HepG2 (cell line): ENCODE measurements at regions of chr16 and their contacts with region 1.

Region 1: DNA sequence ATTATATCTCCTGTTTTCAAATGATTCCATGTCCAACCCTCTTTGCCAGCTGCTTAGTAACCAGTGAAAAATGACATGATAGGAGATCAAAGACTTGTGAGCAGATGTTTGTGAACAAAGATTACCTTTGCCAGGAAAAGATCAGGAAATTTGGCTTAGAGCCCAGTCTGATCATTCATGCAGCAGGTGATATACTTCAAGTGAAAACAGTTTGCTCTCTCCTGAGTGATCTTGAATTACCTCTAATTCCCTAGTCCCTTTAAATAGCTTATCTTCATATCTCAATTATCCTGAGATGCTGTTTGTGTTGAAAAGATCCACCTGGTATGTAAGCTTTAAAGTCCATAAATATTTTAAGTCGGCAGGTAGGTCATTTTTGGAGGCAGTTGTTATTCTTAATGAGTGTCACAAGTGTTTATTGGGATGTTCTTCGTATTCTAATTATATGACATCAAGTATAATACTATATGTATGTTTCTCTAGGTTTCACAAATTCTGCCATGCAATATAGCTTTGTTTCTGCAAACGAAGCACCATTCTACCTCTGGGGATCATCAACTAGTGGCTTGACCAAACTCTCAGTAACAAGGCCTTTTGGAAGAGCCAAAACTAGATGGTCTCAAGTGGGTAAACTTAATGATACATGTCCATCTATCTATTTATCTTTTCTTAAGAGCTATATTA is 13.2 kb upstream of the VPS35L start:
- DNase-seq: peak; percentile 98
- ATAC-seq: peak; percentile 96
- H3K4me3 ChIP-seq: peak overlapping the region in 1 of 3 experiments; percentile 14; a peak in 2 of 6 replicates
- H3K27ac ChIP-seq: peak overlapping the region; percentile 84
- H3K4me1 ChIP-seq: peaks cover 39% of the 10 kb centered on the region
- H3K27me3 ChIP-seq: no peaks in the 10 kb centered on the region
- CTCF ChIP-seq: no peak
- EP300 ChIP-seq: peak in 1 of 2 experiments; percentile 97; a peak in 2 of 4 replicates
- POLR2A ChIP-seq: no peak
- RAD21 ChIP-seq: no peak

Region 2: DNA sequence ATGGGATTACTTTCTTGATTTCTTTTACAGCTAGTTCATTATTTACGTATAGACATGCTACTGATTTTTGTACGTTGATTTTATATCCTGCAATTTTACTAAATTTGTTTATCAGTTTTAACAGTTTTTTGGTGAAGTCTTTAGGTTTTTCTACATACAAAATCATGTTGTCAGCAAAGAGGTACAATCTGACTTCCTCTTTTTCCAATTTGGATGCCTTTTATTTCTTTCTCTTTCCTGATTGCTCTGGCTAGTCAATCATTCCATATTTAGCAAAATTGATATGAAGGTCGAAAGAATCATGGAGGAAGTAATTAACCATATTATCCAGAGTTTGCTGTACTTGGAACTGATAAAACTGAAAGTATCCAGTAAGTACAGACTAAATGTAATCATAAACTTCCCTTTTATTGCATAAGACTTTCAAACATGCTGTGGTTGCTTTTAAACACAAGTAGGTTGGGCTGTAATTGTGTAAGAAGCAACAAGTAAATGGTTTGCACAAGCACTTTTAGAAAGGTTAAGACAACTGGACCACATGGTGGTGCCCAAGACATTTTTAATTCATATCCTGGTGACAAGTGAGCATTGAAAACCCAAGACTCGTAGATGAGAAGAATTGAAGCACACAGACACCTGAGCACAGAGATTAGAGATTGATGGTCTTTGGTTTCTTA is 28.8 kb before region 1 on chr16:
- CTCF ChIA-PET with region 1: no interaction called
- POLR2A ChIA-PET with region 1: no interaction called
- in situ Hi-C with region 1: no loop called
- intact Hi-C with region 1: loop called (anchors 1 kb)
- DNase-seq: no peak
- ATAC-seq: no peak
- H3K4me3 ChIP-seq: no peak overlapping the region
- H3K27ac ChIP-seq: no peak overlapping the region
- H3K4me1 ChIP-seq: peaks cover 28% of the 10 kb centered on the region
- H3K27me3 ChIP-seq: no peaks in the 10 kb centered on the region
- CTCF ChIP-seq: peak; percentile 27; the same call in 1 of the 2 replicates
- EP300 ChIP-seq: no peak
- POLR2A ChIP-seq: no peak
- RAD21 ChIP-seq: no peak

Region 3: DNA sequence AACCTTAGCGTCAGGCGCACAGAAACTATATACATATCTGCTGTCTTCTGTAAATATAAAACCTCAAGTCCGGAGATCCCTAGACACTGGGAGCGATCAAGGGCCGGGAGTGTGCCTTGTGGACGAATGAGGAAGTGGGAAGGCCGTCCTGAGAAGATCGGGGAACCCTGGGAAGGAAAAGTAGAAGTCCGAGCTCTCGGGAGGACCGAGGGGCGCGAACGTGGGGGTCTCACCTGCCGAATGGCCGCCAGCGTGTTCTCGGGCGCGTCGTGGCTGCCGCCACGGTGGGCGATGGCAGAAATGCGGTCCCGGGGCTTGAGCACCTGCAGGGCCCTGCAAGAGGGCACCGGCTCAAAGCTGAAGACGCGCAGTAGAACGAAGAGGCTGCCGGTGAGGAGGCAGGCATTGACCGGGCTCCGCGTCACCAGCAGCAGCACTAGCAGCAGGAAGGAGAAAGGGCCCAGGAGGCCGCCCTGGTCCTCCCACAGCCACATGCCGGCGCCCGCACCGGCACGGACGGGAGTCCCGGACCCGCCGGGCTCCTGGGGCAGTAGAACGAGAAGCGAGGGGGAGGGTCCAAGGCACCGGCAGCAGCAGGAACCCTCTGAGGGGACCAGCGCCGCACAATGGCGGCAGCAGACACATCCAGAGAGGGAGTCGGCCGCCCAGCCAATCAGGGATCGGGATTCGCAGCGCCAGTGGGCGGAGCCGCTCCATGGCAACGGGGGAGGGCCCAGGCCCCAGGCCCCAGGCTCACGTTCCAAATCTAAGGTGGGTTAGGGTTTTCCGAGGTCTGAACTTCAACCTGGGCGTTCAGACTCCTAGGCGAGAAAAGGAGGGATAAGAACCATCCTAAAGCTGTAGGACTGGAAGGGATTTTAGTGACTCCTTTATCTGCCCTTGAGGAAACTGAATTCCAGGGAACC is 20.5 kb before region 1 on chr16 and contains the start of gene GDE1:
- CTCF ChIA-PET with region 1: no interaction called
- POLR2A ChIA-PET with region 1: interaction called, 11 read pairs
- in situ Hi-C with region 1: no loop called
- intact Hi-C with region 1: no loop called
- DNase-seq: peak; percentile 93
- ATAC-seq: peak; percentile 86
- H3K4me3 ChIP-seq: peak within 1 kb of the TSS; percentile 94 to 100 (median 95)
- H3K27ac ChIP-seq: peak within 1 kb of the TSS; percentile 64
- H3K4me1 ChIP-seq: peaks cover 64% of the 10 kb centered on the region
- H3K27me3 ChIP-seq: no peaks in the 10 kb centered on the region; a peak in 1 of 5 replicates
- CTCF ChIP-seq: peak; percentile 85
- EP300 ChIP-seq: no peak
- POLR2A ChIP-seq: peak; percentile 71 to 95
- RAD21 ChIP-seq: no peak
- total RNA-seq, gene GDE1: 55.1 and 59.0 TPM in 2 replicates

Region 4: DNA sequence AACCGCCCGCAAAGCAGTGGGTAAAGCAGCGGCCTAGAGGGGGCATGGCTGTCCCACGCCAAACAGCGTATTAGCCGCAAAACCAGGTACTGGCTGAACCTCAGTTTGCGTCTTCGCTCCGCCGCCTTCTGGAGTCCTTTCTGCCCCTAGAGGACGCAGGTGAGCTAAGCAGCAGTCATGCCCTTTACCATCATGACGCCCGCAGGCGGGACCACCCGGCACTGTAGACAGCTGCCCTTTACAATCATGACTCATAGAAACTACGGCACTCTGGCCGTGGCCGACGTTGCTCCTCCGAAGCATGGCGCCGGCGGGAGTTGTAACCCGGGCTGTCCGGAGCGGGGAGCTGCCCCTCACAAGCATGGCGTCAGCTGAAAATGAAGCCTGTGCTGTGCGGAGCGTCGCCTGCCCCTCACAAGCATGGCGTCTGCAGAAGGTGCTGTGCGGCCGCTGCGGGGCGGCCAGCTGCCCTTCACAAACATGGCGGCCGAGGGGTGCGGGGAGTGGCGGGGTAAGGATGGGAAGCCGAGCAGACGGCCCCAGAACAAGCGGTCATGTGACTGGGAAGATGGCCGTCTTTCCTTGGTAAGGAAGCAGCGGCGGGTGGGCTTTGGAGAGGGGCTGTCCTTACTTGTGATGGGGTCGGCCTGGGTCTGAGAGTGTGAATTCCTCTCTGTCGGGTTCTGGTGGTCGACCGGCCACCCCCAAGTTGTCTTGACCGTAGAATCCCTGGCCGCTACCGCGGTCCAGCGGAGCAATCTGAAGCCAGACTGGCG is 13.1 kb after region 1 on chr16 and contains the start of gene VPS35L:
- CTCF ChIA-PET with region 1: no interaction called
- POLR2A ChIA-PET with region 1: interaction called, 20 read pairs
- in situ Hi-C with region 1: no loop called
- intact Hi-C with region 1: no loop called
- DNase-seq: peak; percentile 92
- ATAC-seq: peak; percentile 99
- H3K4me3 ChIP-seq: peak within 1 kb of the TSS; percentile 38 to 69 (median 57)
- H3K27ac ChIP-seq: peak within 1 kb of the TSS; percentile 48
- H3K4me1 ChIP-seq: peaks cover 19% of the 10 kb centered on the region
- H3K27me3 ChIP-seq: no peaks in the 10 kb centered on the region
- CTCF ChIP-seq: peak; percentile 90
- EP300 ChIP-seq: no peak
- POLR2A ChIP-seq: peak; percentile 48 to 79; a peak in 3 of 4 replicates
- RAD21 ChIP-seq: peak; percentile 48; the same call in 1 of the 2 replicates
- total RNA-seq, gene VPS35L: 0.97 and 1.4 TPM in 2 replicates